ENCODE measurements at regions of chrX and their contacts with region 1.

Region 1: DNA sequence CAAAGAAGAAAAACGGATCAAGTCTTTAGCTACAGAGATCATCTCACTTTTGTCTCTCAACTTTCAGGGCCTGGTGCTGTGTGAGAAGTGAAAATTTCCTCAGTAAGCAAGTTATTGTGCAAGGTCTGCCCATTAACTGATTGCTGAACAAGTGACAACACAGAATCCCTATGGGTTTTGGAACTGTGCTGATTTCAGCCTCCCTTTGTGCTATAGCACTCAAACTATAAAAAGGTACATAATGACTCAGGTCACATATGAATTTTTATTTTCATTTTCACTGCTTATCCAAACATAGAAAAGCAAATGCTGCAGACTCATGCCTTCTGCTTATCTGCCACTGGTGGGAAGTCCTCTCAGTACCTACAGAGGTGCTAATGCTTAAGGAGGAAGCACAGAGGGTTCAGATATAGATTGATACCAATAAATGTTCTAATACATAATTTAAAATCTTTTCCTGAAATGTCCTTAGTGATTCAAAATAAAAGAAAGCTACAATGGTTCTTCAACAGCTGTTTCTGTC is 576.2 kb upstream of the CT83 start:
- DNase-seq: no peak
- ATAC-seq: no peak
- H3K4me3 ChIP-seq: no peak overlapping the region
- H3K27ac ChIP-seq: no peak overlapping the region
- H3K4me1 ChIP-seq: no peaks in the 10 kb centered on the region
- H3K27me3 ChIP-seq: no peaks in the 10 kb centered on the region
- CTCF ChIP-seq: no peak
- POLR2A ChIP-seq: no peak

Region 2: DNA sequence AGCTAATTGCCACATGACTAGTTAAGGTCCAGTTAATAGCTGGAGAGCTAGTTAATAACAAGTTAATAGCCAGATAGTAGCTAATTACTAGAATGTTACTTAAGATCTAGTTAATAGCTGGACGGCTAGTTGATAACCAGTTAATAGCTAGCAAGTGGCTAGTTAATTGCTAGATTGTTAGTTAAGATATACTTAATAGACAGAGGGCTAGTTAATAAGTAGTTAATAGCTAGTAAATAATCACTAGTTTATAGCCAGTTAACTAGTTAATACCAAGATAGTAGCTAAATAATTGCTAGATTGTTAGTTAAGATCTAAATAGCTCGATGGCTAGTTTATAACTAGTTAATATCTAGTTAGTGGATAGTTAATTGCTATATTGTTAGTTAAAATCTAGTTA is 56.4 kb after region 1 on chrX:
- in situ Hi-C with region 1: no loop called
- intact Hi-C with region 1: no loop called
- DNase-seq: no peak
- ATAC-seq: no peak
- H3K4me3 ChIP-seq: no peak overlapping the region
- H3K27ac ChIP-seq: no peak overlapping the region
- H3K4me1 ChIP-seq: no peaks in the 10 kb centered on the region
- H3K27me3 ChIP-seq: no peaks in the 10 kb centered on the region
- CTCF ChIP-seq: no peak
- POLR2A ChIP-seq: no peak

Region 3: GRCh38 chrX:117138070-117138469 is 99.1 kb after region 1 on chrX:
- in situ Hi-C with region 1: loop called in 1 of 4 experiments (anchors 25 kb)
- intact Hi-C with region 1: no loop called
- DNase-seq: no peak
- ATAC-seq: no peak
- H3K4me3 ChIP-seq: no peak overlapping the region
- H3K27ac ChIP-seq: no peak overlapping the region
- H3K4me1 ChIP-seq: no peaks in the 10 kb centered on the region
- H3K27me3 ChIP-seq: no peaks in the 10 kb centered on the region
- CTCF ChIP-seq: no peak
- POLR2A ChIP-seq: no peak

Region 4: DNA sequence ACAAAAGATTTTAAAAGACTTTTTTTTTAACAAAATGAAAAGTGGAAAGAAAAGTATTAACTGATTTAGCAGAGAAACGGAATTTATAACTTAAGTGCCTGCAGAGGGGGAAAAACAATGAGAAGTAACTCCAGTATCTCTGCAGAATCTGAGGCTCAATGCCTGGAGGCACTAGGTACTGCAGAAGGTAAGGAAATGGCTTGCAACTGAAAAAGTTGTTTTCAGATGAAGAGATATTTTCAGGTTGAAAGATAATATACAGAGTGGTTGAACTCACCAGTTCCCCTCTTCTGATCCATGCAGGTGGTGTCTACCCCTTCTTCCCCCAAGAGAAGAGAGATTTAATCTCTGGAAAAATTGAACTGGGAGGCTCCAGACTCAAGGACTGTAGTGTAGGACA is 327.1 kb after region 1 on chrX:
- in situ Hi-C with region 1: no loop called
- intact Hi-C with region 1: no loop called
- DNase-seq: no peak
- ATAC-seq: no peak
- H3K4me3 ChIP-seq: no peak overlapping the region
- H3K27ac ChIP-seq: no peak overlapping the region
- H3K4me1 ChIP-seq: no peaks in the 10 kb centered on the region
- H3K27me3 ChIP-seq: no peaks in the 10 kb centered on the region
- CTCF ChIP-seq: no peak
- POLR2A ChIP-seq: no peak